Activated naive CD4-positive, alpha-beta T cell treated with anti-CD3 and anti-CD28 coated beads for 36 hours (primary cell): ENCODE measurements at regions of chr5 and their contacts with region 1.

Region 1: GRCh38 chr5:77076961-77077823 is 9.9 kb downstream of the ZBED3 start:
- DNase-seq: peak; percentile 61
- H3K4me3 Mint-ChIP-seq: peak overlapping the region; percentile 37
- H3K27ac Mint-ChIP-seq: no peak overlapping the region
- H3K4me1 Mint-ChIP-seq: peaks cover 7% of the 10 kb centered on the region
- H3K27me3 Mint-ChIP-seq: no peaks in the 10 kb centered on the region

Region 2: DNA sequence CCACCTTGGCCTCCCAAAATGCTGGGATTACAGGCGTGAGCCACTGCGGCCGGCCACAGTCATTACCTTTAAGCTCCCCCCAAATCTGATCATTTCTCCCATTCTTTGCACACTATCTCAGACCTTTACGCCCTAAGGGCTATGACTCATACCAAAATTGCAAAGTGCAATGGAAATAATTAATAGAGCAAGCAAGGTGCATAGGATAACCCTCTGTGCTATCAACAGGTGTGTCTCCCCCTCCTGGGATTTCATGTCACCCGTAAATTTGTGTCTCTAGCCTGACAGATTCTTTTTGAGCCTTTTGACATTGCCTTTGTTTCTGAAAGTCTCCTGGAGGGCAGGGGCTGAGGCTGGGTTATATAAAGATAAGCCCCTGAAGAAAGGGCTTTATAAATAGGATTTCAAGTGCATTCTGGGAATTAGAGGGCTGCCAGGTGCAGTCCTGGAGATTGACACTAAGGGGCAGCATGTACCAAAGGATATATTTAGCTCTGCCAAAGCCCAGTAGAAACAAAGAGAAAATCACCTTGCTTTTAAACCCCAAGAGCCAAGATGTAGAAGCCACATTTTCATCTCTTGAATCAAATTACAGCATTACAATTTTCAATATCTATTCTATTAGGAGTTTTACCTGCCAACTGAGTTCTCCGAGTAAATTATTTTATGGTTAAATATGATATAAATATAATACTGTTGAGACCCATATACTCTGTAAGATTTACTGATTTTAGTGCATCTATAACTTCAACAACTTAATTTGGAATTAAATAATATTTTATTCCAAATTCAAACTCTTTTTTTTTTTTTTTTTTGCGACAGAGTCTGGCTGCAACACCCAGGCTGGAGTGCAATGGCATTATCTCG is 209.1 kb before region 1 on chr5:
- CTCF ChIA-PET with region 1: interaction called, 12 read pairs
- intact Hi-C with region 1: loop called (anchors 1 kb)
- DNase-seq: peak; percentile 83
- H3K4me3 Mint-ChIP-seq: no peak overlapping the region
- H3K27ac Mint-ChIP-seq: no peak overlapping the region
- H3K4me1 Mint-ChIP-seq: no peaks in the 10 kb centered on the region
- H3K27me3 Mint-ChIP-seq: no peaks in the 10 kb centered on the region

Region 3: GRCh38 chr5:77066823-77067442 is 10.3 kb before region 1 on chr5:
- CTCF ChIA-PET with region 1: interaction called, 14 read pairs
- intact Hi-C with region 1: no loop called
- DNase-seq: no peak
- H3K4me3 Mint-ChIP-seq: no peak overlapping the region
- H3K27ac Mint-ChIP-seq: no peak overlapping the region
- H3K4me1 Mint-ChIP-seq: no peaks in the 10 kb centered on the region
- H3K27me3 Mint-ChIP-seq: no peaks in the 10 kb centered on the region